Endothelial cell of umbilical vein (primary cell): ENCODE measurements at regions of chr6 and their contacts with region 1.

Region 1: GRCh38 chr6:141562851-141563763 is 569.6 kb upstream of the GJE1 start:
- DNase-seq: peak; percentile 97
- H3K4me3 ChIP-seq: peak overlapping the region in 2 of 3 experiments; percentile 23 to 59
- H3K27ac ChIP-seq: peak overlapping the region; percentile 86
- H3K4me1 ChIP-seq: peaks cover 17% of the 10 kb centered on the region
- H3K27me3 ChIP-seq: no peaks in the 10 kb centered on the region
- CTCF ChIP-seq: peak; percentile 57 to 69
- POLR2A ChIP-seq: no peak

Region 2: DNA sequence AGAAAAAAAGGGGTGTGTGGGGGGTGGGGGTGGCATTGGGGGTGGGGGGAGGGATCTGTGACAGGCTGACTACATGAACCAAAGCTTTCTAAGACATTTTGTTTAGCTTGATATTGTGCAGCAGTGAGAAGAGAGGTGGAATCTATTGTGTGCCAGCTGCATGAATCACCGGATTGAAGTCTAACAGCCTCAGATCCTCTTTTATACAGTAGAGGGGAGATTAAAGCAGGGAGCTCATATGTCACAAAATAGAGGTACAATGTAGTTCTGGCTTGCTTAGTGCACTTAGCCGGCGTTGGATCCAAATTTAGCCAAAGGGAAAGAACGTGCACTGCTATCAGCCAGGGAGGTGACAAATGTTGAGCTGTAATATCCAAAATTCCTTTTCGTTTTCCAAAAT is 1784.4 kb before region 1 on chr6:
- CTCF ChIA-PET with region 1: no interaction called
- POLR2A ChIA-PET with region 1: no interaction called
- dilution Hi-C with region 1: no loop called
- intact Hi-C with region 1: loop called (anchors 5 kb)
- DNase-seq: no peak
- H3K4me3 ChIP-seq: no peak overlapping the region
- H3K27ac ChIP-seq: no peak overlapping the region
- H3K4me1 ChIP-seq: no peaks in the 10 kb centered on the region
- H3K27me3 ChIP-seq: no peaks in the 10 kb centered on the region
- CTCF ChIP-seq: no peak
- POLR2A ChIP-seq: no peak

Region 3: GRCh38 chr6:140225701-140226436 is 1337.2 kb before region 1 on chr6:
- CTCF ChIA-PET with region 1: no interaction called
- POLR2A ChIA-PET with region 1: no interaction called
- dilution Hi-C with region 1: no loop called
- intact Hi-C with region 1: loop called (anchors 5 kb)
- DNase-seq: peak; percentile 81
- H3K4me3 ChIP-seq: no peak overlapping the region
- H3K27ac ChIP-seq: peak overlapping the region; percentile 45
- H3K4me1 ChIP-seq: peaks cover 15% of the 10 kb centered on the region
- H3K27me3 ChIP-seq: no peaks in the 10 kb centered on the region
- CTCF ChIP-seq: no peak
- POLR2A ChIP-seq: no peak

Region 4: GRCh38 chr6:140774080-140774505 is 789.0 kb before region 1 on chr6:
- CTCF ChIA-PET with region 1: no interaction called
- POLR2A ChIA-PET with region 1: no interaction called
- dilution Hi-C with region 1: no loop called
- intact Hi-C with region 1: loop called (anchors 1 kb)
- DNase-seq: peak; percentile 82
- H3K4me3 ChIP-seq: no peak overlapping the region
- H3K27ac ChIP-seq: peak overlapping the region; percentile 20
- H3K4me1 ChIP-seq: peaks cover 18% of the 10 kb centered on the region
- H3K27me3 ChIP-seq: no peaks in the 10 kb centered on the region
- CTCF ChIP-seq: no peak
- POLR2A ChIP-seq: no peak

Region 5: DNA sequence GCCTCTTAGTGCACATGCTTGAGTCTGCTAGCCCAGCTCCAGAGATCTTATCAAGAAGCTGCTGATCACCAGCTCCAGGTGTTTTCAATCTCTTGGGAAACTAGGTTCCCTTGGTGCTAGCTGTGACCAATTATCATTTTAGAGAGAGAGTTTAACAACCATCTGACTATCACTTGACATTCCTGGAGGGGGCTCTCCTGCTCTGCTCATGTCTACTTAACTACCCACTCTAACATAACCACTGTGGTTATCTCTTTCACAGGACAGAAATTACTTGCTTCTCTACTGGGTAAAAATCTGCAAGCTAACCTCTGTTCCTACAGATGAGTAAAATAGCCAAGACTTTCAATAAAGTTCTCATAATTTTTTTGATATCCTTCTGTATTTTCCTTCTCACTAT is 253.8 kb before region 1 on chr6:
- CTCF ChIA-PET with region 1: no interaction called
- POLR2A ChIA-PET with region 1: no interaction called
- dilution Hi-C with region 1: no loop called
- intact Hi-C with region 1: loop called (anchors 5 kb)
- DNase-seq: no peak
- H3K4me3 ChIP-seq: no peak overlapping the region
- H3K27ac ChIP-seq: no peak overlapping the region
- H3K4me1 ChIP-seq: no peaks in the 10 kb centered on the region
- H3K27me3 ChIP-seq: no peaks in the 10 kb centered on the region
- CTCF ChIP-seq: no peak
- POLR2A ChIP-seq: no peak